GM18951 (cell line): ENCODE measurements at regions of chr4 and their contacts with region 1.

Region 1: GRCh38 chr4:110631584-110632505 is 9.0 kb upstream of the PITX2 start:
- POLR2A ChIP-seq: no peak

Region 2: GRCh38 chr4:110963662-110964280 is 331.9 kb after region 1 on chr4:
- in situ Hi-C with region 1: loop called (anchors 10 kb)
- POLR2A ChIP-seq: no peak

Region 3: GRCh38 chr4:111268769-111269414 is 637.0 kb after region 1 on chr4:
- in situ Hi-C with region 1: loop called (anchors 25 kb)
- POLR2A ChIP-seq: no peak

Region 4: DNA sequence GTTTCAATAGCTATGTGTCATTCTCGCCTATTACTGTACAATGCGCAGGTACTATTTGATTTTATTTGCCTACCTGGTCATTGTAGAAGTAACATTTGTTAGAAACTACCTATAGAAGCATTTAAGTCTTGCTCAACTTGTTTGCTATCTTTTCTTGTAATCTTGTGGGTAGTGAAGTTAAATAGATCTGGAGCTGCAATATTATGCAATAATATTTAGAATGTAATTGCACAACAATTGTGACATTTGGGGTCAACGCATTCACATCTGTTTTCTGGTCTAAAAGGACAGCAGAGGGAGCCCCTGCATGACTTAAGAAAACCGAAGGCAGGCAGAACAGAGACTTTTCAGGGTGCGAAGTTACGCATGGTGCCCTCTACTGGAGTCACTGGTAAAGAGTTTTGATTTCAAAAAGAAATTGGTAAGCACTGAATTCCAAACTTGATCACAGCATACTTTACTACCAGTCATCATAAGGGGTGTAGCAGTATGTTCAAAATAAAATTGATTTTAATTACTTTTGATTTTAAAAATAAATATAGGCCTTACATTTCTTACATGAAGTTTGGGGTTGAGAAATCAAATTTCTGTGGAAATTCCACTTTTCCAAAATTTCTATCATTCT is 1010.2 kb after region 1 on chr4:
- in situ Hi-C with region 1: loop called (anchors 25 kb)
- POLR2A ChIP-seq: no peak